ENCODE measurements at regions of chr18 and their contacts with region 1.

Region 1: DNA sequence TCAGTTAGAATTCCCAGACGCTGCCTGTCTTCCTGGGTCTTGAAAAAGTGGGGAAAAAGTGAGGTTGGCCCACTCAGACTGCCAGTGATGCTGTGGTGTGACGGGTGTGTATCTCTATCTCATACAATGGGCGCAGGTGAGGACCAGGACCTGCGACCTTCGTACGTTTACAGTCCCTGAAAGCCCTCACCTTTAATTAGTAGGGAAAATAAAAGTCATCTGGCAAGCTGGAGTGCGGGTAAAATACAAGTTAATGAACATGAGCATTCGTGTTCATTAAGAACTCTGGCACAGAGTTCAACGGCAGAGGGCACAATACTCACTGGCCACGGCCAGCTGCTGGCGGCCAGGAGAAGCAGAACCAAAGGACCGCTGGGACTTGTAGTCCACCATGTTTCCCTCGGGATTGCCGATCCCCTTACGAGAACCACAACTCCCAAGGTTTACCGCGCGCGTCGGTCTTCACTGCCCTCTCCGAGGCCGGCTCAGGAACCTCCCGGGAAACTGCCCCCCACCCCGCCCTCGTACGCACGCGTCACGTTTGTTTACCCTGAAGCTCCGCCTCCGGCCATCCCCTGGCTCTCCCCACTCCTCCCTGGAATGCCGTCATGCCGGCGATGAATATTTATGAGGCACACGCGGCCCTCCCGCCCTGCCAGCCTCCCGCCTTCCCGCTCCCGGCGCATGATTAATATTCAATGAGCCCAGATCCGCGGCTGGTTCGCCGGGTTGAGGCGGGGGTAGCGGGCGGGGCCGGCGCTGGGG is 488 bp upstream of the PHLPP1 start:
- DNase-seq: peak; percentile 99
- H3K4me3 ChIP-seq: peak overlapping the region; percentile 73 to 93 (median 86)
- H3K27ac ChIP-seq: peak overlapping the region; percentile 53
- H3K4me1 ChIP-seq: peaks cover 10% of the 10 kb centered on the region
- H3K27me3 ChIP-seq: no peaks in the 10 kb centered on the region
- CTCF ChIP-seq: peak; percentile 62 to 87

Region 2: DNA sequence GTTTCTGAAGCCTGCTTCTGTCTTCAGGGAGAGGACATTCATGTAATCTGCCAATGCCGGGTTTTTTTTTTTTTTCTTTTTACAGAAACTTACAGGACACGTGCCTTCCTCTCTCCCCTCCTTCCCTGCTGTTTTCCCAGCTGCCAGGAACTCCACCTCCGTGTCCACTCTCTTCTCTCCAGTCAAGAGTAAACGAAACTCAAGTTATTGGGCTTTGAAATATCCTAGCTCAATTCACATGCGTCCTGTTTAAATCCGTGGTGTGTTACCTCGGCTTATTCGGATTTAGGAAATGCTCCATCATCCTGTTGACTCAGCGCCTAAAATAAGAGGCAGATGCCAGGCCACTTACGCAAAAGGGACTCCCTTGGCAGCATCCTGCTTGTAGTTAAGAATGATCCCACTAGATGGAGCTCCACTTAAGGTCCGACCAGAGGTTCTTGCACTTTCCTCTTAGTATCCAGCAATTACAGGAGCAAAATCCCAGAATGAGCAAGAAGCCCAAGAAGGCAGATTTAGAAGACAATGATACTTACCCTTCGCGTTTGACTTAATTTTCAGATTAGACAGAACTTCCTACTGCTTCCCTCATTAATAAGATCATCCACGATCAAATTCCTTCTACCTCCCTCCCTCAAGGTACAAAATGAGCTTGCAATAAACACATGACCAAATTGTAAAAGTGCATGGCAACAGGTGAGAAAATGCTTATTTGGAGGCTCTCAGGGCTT is 289.2 kb before region 1 on chr18:
- CTCF ChIA-PET with region 1: no interaction called
- dilution Hi-C with region 1: no loop called
- in situ Hi-C with region 1: no loop called
- intact Hi-C with region 1: loop called (anchors 5 kb)
- DNase-seq: peak; percentile 93
- H3K4me3 ChIP-seq: peak overlapping the region in 2 of 3 experiments; percentile 1 to 9
- H3K27ac ChIP-seq: peak overlapping the region; percentile 41
- H3K4me1 ChIP-seq: peaks cover 12% of the 10 kb centered on the region
- H3K27me3 ChIP-seq: no peaks in the 10 kb centered on the region
- CTCF ChIP-seq: peak; percentile 83 to 91

Region 3: GRCh38 chr18:62637807-62638687 is 76.8 kb before region 1 on chr18:
- CTCF ChIA-PET with region 1: no interaction called
- dilution Hi-C with region 1: no loop called
- in situ Hi-C with region 1: no loop called
- intact Hi-C with region 1: loop called (anchors 1 kb)
- DNase-seq: peak; percentile 9
- H3K4me3 ChIP-seq: no peak overlapping the region
- H3K27ac ChIP-seq: no peak overlapping the region
- H3K4me1 ChIP-seq: peaks cover 18% of the 10 kb centered on the region
- H3K27me3 ChIP-seq: no peaks in the 10 kb centered on the region
- CTCF ChIP-seq: peak; percentile 67 to 70

Region 4: DNA sequence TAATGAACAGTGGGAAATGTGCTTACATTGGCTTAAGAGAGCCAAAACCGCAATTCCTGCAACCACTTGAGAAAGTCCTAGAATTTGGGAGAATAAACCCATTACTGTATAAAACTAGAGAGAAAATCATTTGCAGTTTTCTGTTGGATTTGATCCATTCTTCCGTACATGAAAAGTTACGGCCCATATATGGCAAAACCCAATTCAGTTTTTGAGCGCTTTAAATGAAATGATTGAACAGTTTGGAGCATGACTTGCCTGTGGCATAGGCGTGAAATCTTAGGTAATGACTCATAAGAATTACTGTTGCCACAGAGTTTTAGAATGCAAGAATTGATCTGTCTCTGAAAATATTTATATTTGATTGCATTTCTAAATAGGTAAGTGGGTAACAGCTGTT is 52.5 kb after region 1 on chr18:
- CTCF ChIA-PET with region 1: no interaction called
- dilution Hi-C with region 1: no loop called
- in situ Hi-C with region 1: loop called in 1 of 2 experiments (anchors 5 kb)
- intact Hi-C with region 1: loop called (anchors 2 kb)
- DNase-seq: peak; percentile 62
- H3K4me3 ChIP-seq: peak overlapping the region; percentile 21 to 48 (median 28)
- H3K27ac ChIP-seq: peak overlapping the region; percentile 89
- H3K4me1 ChIP-seq: peaks cover 48% of the 10 kb centered on the region
- H3K27me3 ChIP-seq: no peaks in the 10 kb centered on the region
- CTCF ChIP-seq: no peak

Region 5: DNA sequence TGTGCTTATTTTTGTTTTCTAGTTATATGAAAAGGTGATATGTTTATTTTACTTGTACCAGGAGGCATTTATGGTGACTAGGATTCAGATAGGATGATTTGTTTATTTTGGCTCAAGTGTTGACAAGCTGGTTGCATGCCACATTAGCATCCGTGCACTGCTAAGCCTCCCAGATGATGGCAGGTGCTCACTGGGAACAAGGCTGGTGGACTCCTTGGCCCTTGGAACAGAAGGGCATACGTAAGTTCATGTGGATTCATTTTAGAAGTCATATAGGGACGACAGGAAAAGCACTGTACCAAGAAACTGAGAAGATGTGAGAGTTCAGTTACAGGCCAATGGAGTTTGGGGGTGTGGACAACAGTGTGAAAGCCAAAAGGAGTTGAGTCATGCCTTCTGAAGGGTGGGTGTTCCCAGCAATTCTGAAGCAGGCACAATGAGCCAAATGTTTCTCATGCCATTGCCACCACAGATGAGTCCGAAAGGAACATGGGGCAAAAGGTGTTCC is 166.7 kb after region 1 on chr18:
- CTCF ChIA-PET with region 1: no interaction called
- dilution Hi-C with region 1: no loop called
- in situ Hi-C with region 1: no loop called
- intact Hi-C with region 1: loop called (anchors 2 kb)
- DNase-seq: peak; percentile 92
- H3K4me3 ChIP-seq: no peak overlapping the region
- H3K27ac ChIP-seq: peak overlapping the region; percentile 32
- H3K4me1 ChIP-seq: peaks cover 27% of the 10 kb centered on the region
- H3K27me3 ChIP-seq: no peaks in the 10 kb centered on the region
- CTCF ChIP-seq: no peak

Region 6: DNA sequence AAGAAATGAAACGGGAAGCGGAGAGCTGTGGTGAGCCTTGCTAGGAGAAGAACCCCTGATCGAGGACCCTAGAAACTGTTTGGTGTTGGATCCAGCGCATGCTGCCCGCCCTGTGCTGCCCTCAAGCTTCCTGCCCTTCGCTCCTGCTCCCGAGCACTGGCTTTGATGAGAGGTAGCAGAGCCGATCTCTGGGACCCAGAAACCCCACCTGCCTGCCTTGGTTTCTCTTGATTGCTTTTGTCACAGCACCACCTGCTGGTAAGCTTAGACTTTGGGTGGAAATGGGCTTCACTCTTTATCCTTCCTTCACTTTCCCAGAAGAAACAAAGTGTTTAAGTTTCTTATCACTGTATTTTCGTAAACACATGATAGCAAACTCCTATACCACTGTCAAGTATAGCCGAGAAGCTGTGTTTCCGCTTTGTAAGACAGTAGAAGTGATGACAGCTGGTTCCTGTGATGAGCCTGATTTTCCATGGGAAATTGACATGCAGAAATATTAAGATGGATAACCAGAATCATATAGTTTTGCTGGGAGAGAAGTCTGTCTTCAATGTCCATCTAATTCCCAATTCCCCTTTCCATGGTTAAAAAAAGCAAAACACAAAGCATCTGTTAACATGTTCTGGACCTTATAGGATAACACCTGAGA is 267.9 kb after region 1 on chr18:
- CTCF ChIA-PET with region 1: no interaction called
- dilution Hi-C with region 1: no loop called
- in situ Hi-C with region 1: loop called in 1 of 2 experiments (anchors 10 kb)
- intact Hi-C with region 1: loop called (anchors 1 kb)
- DNase-seq: peak; percentile 28
- H3K4me3 ChIP-seq: no peak overlapping the region
- H3K27ac ChIP-seq: no peak overlapping the region
- H3K4me1 ChIP-seq: no peaks in the 10 kb centered on the region
- H3K27me3 ChIP-seq: no peaks in the 10 kb centered on the region
- CTCF ChIP-seq: peak; percentile 65 to 79